Left lung (tissue), 14 donors: ENCODE measurements at regions of chr2 and their contacts with region 1.

Region 1: DNA sequence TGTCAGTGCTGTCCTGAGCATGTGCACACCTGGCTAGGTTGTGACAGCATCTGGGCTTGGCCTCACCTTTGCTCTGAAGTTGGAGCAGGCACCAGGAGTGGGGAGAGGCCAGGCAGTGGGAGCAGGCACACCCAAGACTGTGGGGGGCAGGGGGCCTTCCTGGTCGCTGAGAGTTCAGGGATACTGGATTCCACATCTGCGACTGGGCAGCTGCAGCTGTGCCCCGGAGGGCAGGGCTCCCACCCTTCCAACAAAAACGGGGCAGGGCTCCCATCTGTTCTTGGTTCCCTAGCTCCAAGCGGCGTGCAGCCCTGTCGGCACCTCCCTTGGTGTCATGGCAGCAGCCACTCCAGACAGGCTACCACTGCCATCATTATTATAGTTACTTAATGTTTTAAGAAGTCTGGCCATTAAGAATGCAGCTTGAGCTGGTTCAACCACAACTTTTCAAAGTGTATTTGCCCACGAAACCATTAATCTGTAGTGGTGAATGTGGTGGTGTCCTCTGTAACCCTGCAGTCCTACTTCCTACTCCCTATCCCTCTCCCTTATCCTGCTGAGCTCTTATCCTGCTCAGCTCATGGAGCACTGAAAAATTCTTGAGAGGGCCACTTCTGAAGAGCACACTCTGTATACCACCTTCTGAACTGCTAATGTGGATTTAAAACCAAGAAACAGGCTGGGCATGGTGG is 48.0 kb upstream of the RAB1A start:
- DNase-seq: peak in 1 of 4 donors; percentile 62
- ATAC-seq: no peak
- H3K4me3 ChIP-seq: no peak overlapping the region
- H3K27ac ChIP-seq: no peak overlapping the region
- H3K4me1 ChIP-seq: no peaks in the 10 kb centered on the region
- H3K27me3 ChIP-seq: no peaks in the 10 kb centered on the region
- CTCF ChIP-seq: no peak

Region 2: GRCh38 chr2:65064728-65065552 is 113.0 kb before region 1 on chr2:
- intact Hi-C with region 1: loop called in 1 of 2 experiments (anchors 10 kb)
- DNase-seq: peak in 2 of 4 donors; percentile 61 to 79
- ATAC-seq: peak; percentile 87
- H3K4me3 ChIP-seq: no peak overlapping the region
- H3K27ac ChIP-seq: peak overlapping the region; percentile 69 to 87
- H3K4me1 ChIP-seq: peaks cover 28 to 73% of the 10 kb centered on the region in 2 donors
- H3K27me3 ChIP-seq: no peaks in the 10 kb centered on the region
- CTCF ChIP-seq: peak; percentile 40 to 57